ENCODE measurements at regions of chr2 and their contacts with region 1.

Region 1: DNA sequence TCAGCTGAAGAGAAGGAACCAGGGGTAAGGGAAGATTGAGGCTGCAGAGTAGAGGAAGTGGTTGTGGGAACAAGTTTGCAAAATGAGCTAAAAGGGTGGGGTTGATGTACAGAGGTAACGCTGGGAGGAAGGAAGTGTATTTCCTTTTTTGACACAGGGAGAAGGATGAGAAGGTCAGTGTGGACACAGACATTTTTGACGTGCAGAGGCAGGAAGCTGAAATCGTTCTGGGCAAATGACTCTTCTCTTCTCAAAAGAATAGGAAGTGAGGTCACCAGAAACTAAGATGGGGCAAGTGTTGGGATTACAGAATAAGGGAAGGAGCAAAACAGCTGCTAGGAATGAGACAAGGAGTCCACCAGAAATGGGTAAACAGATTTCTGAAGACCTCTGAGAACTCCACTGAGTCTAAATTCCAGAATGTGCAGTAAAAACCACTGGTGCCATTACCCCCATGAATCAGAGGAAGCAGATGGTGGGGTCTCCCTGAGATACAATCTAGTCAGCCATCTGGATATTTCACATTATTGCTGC is 20.0 kb upstream of the RNF149 start:
- DNase-seq: peak; percentile 69
- H3K4me3 Mint-ChIP-seq: no peak overlapping the region
- H3K27ac Mint-ChIP-seq: no peak overlapping the region
- H3K4me1 Mint-ChIP-seq: peaks cover 10% of the 10 kb centered on the region
- H3K27me3 Mint-ChIP-seq: no peaks in the 10 kb centered on the region

Region 2: DNA sequence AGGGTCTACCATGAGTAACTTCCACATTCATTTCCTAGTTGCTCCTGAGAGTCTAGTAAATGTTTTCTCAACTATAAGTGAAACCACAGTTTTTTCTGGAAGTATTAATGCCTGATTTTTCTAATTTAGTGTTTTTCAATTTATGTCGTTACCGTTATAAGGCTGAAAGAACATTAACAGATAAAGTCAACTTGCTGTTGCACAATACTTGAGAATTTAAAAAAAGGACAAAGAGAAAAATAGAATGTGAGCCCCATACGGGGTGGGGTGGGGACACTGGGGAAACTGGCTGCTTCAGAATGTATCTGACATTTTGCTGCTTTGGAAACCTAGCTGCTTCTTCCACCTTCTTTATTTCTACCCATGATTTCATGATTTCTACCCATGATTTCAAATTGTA is 49.6 kb before region 1 on chr2:
- CTCF ChIA-PET with region 1: no interaction called
- POLR2A ChIA-PET with region 1: no interaction called
- DNase-seq: no peak
- H3K4me3 Mint-ChIP-seq: no peak overlapping the region
- H3K27ac Mint-ChIP-seq: peak overlapping the region; percentile 46
- H3K4me1 Mint-ChIP-seq: peaks cover 25% of the 10 kb centered on the region
- H3K27me3 Mint-ChIP-seq: no peaks in the 10 kb centered on the region

Region 3: GRCh38 chr2:101291973-101292372 is 36.6 kb before region 1 on chr2:
- CTCF ChIA-PET with region 1: no interaction called
- POLR2A ChIA-PET with region 1: no interaction called
- DNase-seq: no peak
- H3K4me3 Mint-ChIP-seq: no peak overlapping the region
- H3K27ac Mint-ChIP-seq: no peak overlapping the region
- H3K4me1 Mint-ChIP-seq: peaks cover 27% of the 10 kb centered on the region
- H3K27me3 Mint-ChIP-seq: no peaks in the 10 kb centered on the region

Region 4: GRCh38 chr2:101308432-101309210 is 19.9 kb before region 1 on chr2 and contains the start of gene RNF149:
- CTCF ChIA-PET with region 1: interaction called, 6 read pairs
- POLR2A ChIA-PET with region 1: interaction called, 122 read pairs
- DNase-seq: peak; percentile 93
- H3K4me3 Mint-ChIP-seq: peak within 1 kb of the TSS; percentile 100
- H3K27ac Mint-ChIP-seq: peak within 1 kb of the TSS; percentile 97
- H3K4me1 Mint-ChIP-seq: peaks cover 69% of the 10 kb centered on the region
- H3K27me3 Mint-ChIP-seq: no peaks in the 10 kb centered on the region
- total RNA-seq, gene RNF149: 115 to 116 TPM

Measured in activated CD4-positive, alpha-beta memory T cell treated with anti-CD3 and anti-CD28 coated beads, Interleukin-2, amount 10 ng/mL, durations not matched to agents 7 days and 5 days (primary cell).